ENCODE measurements at regions of chr16 and their contacts with region 1.

Region 1: DNA sequence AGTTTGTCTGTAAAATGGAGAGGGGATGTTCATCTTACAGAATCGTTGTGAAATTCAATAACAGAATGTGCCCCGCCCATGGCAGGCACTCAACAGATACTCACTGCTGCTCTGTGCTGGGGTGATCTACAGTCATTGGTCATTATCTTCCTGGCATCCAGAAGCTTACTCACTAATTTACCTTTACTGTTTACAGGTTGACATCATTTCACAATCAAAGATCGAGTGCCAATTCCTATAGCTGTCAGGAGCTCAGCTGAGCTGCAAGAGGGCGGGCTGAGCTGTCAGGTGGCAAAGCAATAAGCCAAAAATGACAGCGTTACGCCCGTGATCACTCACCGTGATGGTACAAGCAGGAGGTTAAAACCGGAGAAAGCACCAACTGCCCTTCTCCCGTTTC is 51.2 kb downstream of the LITAF start:
- DNase-seq: peak; percentile 39
- ATAC-seq: no peak
- H3K4me3 ChIP-seq: no peak overlapping the region
- H3K27ac ChIP-seq: no peak overlapping the region
- H3K4me1 ChIP-seq: peaks cover 19% of the 10 kb centered on the region
- H3K27me3 ChIP-seq: peaks cover 0 to 2% of the 10 kb centered on the region in 2 experiments; a peak in 2 of 5 replicates
- CTCF ChIP-seq: no peak
- EP300 ChIP-seq: no peak
- POLR2A ChIP-seq: no peak
- RAD21 ChIP-seq: no peak

Region 2: DNA sequence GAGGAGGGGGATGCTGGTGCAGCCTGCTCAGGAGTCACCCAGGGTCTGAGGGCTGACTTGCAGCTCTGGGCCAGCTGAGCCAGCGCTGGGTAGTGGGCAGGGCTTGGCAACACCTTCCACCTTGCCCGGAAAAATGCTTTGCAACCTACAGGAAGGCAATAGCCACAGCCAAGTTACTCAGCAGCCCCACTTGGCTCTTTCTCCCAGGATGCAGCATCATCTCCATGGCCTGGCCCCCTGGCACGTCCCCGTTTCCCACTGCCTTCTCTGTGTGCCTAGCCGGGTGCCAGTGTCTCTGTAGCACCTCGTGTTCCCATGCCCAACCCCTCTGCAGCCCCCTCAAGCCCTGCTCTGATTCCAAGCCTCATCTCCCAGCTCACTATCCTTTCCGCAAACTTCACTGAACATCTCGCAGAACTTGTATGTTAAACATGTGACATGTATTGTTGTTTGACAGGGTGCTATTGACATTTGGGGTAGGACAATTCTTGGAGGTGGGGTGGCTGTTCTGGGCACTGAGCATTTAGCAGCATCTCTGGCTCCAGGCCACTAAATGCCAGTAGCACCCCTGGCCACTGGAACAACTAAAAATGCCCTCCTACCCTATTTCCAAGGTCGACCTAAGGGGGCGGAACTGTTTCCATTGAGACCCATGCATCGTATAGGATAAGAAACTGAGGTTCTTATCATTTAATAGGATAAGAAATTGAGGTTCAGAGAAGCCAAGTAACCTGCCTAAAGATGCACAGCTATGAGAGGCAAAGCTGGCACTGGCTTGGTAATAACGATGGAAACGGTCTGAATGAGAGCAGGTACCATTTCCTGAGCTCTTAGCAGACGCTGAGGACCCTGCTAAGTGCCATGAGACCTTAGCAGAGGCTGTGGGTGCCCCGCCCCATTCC is 605.4 kb before region 1 on chr16:
- CTCF ChIA-PET with region 1: no interaction called
- POLR2A ChIA-PET with region 1: no interaction called
- in situ Hi-C with region 1: no loop called
- intact Hi-C with region 1: no loop called
- DNase-seq: no peak
- ATAC-seq: no peak
- H3K4me3 ChIP-seq: no peak overlapping the region
- H3K27ac ChIP-seq: no peak overlapping the region
- H3K4me1 ChIP-seq: no peaks in the 10 kb centered on the region
- H3K27me3 ChIP-seq: no peaks in the 10 kb centered on the region
- CTCF ChIP-seq: no peak
- EP300 ChIP-seq: no peak
- POLR2A ChIP-seq: 0 out of 4 replicates have a peak, but pooled peaks have one; percentile 9 to 21
- RAD21 ChIP-seq: no peak

Region 3: DNA sequence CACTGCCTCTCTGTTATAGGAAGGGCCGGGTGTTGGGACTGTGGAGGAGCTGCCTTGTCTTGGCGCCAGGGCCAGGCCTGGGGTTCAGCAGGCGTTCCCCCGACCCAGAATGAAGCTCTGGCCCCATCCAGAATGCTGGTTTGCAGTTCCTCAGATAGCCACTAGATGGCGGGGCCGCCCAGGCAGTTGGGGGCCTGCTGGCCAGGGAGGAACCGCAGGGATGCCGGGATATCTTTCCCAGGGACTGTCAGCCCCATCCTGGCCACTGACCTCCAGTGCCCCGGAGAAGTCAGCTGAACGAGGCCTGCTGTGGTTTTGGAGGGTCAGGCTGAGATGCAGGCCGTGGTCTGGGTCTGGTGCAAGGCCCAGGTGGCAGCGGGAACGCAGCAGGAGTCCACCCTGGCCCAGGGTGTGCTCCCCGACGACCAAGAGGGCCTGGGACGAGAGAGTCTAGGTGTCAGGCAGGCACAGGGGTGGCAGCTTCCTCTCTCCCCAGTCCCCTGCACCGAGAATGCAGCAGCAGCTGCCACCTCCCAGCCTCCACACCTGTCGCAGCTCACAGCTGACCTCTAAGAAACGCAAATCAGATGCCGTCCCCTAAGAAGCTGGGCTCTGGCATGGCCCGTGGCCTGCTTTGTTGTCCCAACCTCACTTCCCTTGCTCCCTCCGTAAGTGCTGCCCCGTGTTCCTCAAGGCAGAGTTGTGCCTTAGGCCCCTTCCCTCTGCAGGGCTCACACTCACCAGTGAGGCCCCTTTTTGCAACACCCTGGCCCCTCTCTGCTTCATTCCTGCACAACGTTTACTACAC is 139.0 kb before region 1 on chr16:
- CTCF ChIA-PET with region 1: interaction called, 8 read pairs
- POLR2A ChIA-PET with region 1: no interaction called
- in situ Hi-C with region 1: no loop called
- intact Hi-C with region 1: loop called (anchors 1 kb)
- DNase-seq: peak; percentile 76
- ATAC-seq: peak; percentile 85
- H3K4me3 ChIP-seq: peak overlapping the region; percentile 53 to 79 (median 57)
- H3K27ac ChIP-seq: no peak overlapping the region
- H3K4me1 ChIP-seq: peaks cover 44% of the 10 kb centered on the region
- H3K27me3 ChIP-seq: peaks cover 48 to 74% of the 10 kb centered on the region in 2 experiments
- CTCF ChIP-seq: peak; percentile 100
- EP300 ChIP-seq: peak; percentile 23 to 34; a peak in 2 of 4 replicates
- POLR2A ChIP-seq: no peak
- RAD21 ChIP-seq: peak; percentile 99

Region 4: DNA sequence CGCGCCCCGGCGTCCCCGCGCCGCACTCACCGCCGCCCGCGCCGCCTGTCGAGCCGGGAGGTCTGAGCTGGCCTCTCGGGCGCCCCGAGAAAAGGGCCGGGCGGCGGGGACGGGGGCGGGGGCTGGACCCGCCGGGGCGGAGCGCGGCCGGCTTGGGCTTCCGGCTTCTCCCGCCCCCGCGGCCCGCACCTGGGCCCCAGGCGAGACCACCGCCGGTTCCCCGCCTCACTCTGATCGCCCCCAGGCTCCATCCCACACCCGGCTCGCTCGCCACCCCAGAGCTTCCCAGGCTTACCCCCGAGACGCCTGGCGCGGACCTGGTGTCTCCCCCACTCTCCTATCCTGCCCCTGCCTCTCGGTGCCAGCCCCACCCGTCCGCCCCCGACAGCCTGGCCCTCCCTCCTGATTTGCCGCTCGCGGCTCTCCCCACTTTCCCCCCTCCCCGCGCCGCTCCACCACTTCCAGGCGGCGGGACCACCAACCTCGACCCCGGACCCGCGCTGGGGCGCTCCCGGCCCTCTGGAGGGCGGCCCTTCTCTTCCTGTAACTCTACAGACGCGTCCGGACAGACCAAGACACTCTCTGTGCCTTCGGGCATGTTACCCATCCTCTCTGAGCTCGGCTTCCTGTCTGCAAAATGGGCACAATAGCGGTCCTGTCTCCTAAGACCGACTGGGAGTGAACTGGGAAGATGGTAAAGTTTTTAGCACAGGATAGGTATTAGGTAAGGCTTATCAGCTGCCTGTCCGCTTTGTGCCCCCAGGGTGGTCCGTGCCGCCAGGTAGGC is 51.6 kb after region 1 on chr16 and contains the start of gene LITAF:
- CTCF ChIA-PET with region 1: interaction called, 6 read pairs
- POLR2A ChIA-PET with region 1: interaction called, 5 read pairs
- in situ Hi-C with region 1: no loop called
- intact Hi-C with region 1: loop called (anchors 5 kb)
- DNase-seq: no peak
- ATAC-seq: peak; percentile 80
- H3K4me3 ChIP-seq: peak within 1 kb of the TSS; percentile 73 to 96 (median 96)
- H3K27ac ChIP-seq: peak within 1 kb of the TSS; percentile 57
- H3K4me1 ChIP-seq: peaks cover 47% of the 10 kb centered on the region
- H3K27me3 ChIP-seq: peaks cover 0 to 21% of the 10 kb centered on the region in 2 experiments; a peak in 2 of 5 replicates
- CTCF ChIP-seq: peak; percentile 58
- EP300 ChIP-seq: no peak; a peak in 1 of 4 replicates
- POLR2A ChIP-seq: peak; percentile 42 to 83; a peak in 3 of 4 replicates
- RAD21 ChIP-seq: no peak
- total RNA-seq, gene LITAF: 141 and 186 TPM in 2 replicates

Region 5: DNA sequence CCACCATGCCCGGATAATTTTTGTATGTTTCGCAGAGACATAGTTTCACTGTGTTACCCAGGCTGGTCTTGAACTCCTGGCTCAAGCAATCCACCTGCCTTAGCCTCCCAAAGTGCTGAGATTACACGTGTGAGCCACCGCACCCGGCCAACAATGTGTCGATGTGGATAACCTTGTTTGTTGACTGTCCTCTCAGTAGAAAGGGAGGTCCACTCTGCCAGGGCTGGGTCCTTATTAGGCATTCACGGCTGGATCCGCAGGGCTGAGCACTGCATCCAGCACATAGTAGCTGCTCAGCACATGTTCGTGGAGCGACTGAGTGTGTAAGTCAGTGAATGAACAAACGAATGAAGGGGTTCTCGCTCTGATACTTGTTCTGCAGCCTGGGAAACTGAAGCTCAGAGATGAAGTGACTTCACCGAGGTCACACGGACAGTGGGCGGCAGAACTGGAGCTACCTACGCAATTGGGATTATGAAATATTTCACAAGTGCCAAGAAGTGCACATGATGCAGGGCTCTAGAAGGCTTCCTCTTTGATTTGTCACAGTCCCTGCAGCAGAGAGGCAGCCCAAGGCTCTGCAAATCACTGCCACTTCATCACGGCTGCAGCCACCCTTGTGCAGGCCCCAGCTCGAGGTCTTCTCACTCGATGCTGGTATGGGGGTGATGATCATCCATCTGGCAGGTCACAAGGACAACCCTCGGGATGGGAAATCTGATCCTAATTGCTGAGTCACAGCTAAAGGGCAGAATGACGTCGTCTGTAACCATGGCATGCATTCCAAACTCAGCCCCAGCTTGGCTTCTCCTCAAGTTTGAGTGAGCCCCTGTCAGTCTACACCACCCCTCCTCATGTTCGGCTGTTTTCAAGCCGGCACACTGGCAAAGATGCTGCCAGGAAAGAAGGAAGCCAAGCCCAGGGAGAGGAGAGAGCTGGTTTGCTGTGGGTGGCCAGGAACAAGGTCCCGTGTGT is 104.7 kb after region 1 on chr16:
- CTCF ChIA-PET with region 1: interaction called, 68 read pairs
- POLR2A ChIA-PET with region 1: interaction called, 6 read pairs
- in situ Hi-C with region 1: loop called (anchors 5 kb)
- intact Hi-C with region 1: loop called (anchors 1 kb)
- DNase-seq: peak; percentile 90
- ATAC-seq: peak; percentile 75
- H3K4me3 ChIP-seq: peak overlapping the region in 1 of 3 experiments; percentile 63; a peak in 2 of 6 replicates
- H3K27ac ChIP-seq: peak overlapping the region; percentile 0
- H3K4me1 ChIP-seq: peaks cover 34% of the 10 kb centered on the region
- H3K27me3 ChIP-seq: peaks cover 0 to 11% of the 10 kb centered on the region in 2 experiments; a peak in 2 of 5 replicates
- CTCF ChIP-seq: no peak; the same call in none of the 2 replicates
- EP300 ChIP-seq: peak in 1 of 2 experiments; percentile 90; a peak in 2 of 4 replicates
- POLR2A ChIP-seq: peak in 1 of 2 experiments; percentile 63; a peak in 1 of 4 replicates
- RAD21 ChIP-seq: no peak

Region 6: DNA sequence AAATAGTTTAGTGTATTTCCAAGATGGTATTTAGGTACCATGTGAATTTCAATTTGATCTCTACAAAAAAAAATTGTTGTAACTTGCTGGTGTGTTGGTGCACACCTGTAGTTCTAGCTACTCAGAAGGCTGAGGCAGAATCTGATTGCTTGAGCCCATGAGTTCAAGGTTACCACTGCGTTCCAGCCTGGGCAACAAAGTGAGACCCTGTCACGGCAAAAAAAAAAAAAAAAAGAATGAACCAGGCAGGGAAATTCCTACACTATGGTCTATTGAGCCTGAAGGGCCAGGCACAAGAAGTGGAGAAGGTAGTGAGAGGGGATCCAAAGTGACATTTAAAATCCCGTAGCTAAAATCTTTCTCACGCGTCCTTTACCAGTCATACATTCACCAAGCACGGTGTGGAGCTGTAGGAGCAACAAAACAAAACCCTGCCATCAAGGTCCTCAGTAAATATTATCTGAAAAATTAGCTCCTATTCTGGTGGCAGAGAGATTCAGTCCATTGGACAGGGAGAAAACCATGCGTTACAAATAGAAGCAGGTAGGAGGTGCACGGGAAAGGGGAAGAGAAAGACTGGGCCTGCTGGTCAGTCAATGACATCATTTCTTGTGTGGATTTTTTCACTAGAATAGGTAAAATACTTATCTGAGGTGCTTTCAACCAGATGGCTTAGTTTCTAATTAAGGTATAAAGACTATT is 179.9 kb after region 1 on chr16:
- CTCF ChIA-PET with region 1: interaction called, 33 read pairs
- POLR2A ChIA-PET with region 1: no interaction called
- in situ Hi-C with region 1: no loop called
- intact Hi-C with region 1: loop called (anchors 1 kb)
- DNase-seq: peak; percentile 15
- ATAC-seq: peak; percentile 35
- H3K4me3 ChIP-seq: no peak overlapping the region
- H3K27ac ChIP-seq: peak overlapping the region; percentile 34
- H3K4me1 ChIP-seq: peaks cover 41% of the 10 kb centered on the region
- H3K27me3 ChIP-seq: no peaks in the 10 kb centered on the region
- CTCF ChIP-seq: peak; percentile 20; the same call in 1 of the 2 replicates
- EP300 ChIP-seq: no peak
- POLR2A ChIP-seq: no peak
- RAD21 ChIP-seq: no peak

Region 7: DNA sequence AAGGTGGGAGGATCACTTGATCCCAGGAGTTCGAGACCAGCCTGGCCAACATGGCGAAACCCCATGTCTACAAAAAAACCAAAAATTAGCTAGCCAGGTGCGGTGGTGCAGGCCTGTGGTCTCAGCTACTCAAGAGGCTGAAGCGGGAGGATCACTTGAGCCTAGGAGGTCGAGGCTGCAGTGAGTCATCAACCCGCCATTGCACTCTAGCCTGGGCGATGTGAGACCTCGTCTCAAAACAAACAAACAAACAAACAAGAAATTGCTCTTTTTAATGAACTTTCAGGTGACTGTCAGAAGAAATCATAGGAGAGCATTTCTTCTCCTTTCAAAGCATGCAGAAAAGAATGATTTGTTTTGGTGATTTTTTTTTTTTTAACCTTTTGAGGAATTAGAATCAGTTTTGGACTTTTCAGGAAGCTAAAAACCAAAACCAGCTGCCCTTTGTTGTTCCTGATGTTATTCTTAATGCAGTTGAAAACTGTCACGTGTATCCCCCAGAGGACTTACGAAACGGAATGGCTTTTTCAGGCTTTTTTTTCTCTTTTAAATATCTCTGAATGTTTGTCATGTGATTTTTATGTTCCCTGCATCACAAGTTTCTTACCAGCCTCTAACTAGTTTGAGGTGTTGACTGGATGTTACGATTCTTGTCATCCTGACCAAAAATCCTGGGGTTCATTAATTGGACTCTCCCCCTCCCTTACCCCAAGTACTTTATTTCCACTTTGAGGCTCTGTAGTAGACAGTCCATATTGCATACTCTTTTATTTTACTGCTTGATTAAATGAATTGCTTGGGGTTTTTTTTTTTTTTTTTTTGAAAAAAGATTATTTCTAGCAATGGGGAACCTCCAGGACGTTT is 475.1 kb after region 1 on chr16:
- CTCF ChIA-PET with region 1: no interaction called
- POLR2A ChIA-PET with region 1: no interaction called
- in situ Hi-C with region 1: no loop called
- intact Hi-C with region 1: no loop called
- DNase-seq: no peak
- ATAC-seq: no peak
- H3K4me3 ChIP-seq: no peak overlapping the region
- H3K27ac ChIP-seq: no peak overlapping the region
- H3K4me1 ChIP-seq: peaks cover 7% of the 10 kb centered on the region
- H3K27me3 ChIP-seq: no peaks in the 10 kb centered on the region
- CTCF ChIP-seq: no peak
- EP300 ChIP-seq: no peak
- POLR2A ChIP-seq: no peak
- RAD21 ChIP-seq: no peak